Common myeloid progenitor, CD34-positive (primary cell): ENCODE measurements at regions of chr12 and their contacts with region 1.

Region 1: GRCh38 chr12:49644620-49644994 is 21.2 kb downstream of the PRPF40B start:
- DNase-seq: peak; percentile 79 to 91 (median 87)
- H3K4me3 ChIP-seq: peak overlapping the region in 1 of 7 experiments; percentile 19
- H3K27ac ChIP-seq: no peak overlapping the region
- H3K4me1 ChIP-seq: peaks cover 0 to 23% (median 15%) of the 10 kb centered on the region in 4 experiments
- H3K27me3 ChIP-seq: no peaks in the 10 kb centered on the region

Region 2: GRCh38 chr12:49631336-49631907 is 13.2 kb before region 1 on chr12:
- CTCF ChIA-PET with region 1: interaction called, 67 read pairs
- POLR2A ChIA-PET with region 1: interaction called, 3 read pairs
- DNase-seq: no peak
- H3K4me3 ChIP-seq: no peak overlapping the region
- H3K27ac ChIP-seq: no peak overlapping the region
- H3K4me1 ChIP-seq: no peaks in the 10 kb centered on the region
- H3K27me3 ChIP-seq: peaks cover 0 to 2% (median 0%) of the 10 kb centered on the region in 5 experiments

Region 3: DNA sequence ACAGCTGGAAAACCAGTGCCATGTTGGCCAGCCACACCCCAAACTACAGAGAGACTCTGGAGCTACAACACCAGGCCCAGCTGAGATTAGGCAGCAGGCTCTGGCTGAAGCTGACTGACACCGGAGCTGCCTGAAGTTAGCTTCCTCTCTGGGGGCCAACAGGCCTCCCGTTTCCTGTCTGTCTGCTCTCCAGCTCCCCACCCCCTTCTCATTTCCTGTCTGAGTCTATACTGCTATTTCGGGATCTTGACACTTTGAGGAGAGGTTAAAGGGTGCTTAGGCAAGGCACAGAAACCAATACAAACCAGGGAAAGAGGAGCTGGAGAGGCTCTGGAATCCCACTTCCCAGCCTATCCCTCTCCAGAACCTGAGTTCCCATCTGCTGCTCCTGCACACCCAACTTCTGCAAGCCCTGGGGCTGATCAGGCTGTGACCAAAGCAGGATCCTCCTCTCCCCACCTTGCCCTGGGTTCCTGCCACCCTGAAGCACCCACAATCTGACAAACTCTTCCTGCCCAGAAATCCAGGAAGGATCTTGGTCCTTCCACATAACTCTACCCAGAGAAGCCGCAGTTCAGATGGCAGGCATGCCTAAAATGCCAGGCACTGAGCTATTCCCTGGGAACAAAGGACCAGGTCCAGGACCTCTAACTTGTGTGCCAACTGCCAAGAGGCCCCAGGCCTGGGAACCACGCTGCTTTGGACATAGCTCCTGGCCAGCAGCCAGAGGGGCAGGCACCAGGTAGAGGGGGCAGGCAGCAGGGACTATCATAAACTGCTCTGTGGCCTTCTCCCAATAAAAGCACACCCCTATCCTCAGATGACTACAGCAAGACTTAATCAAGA is 18.6 kb after region 1 on chr12:
- CTCF ChIA-PET with region 1: interaction called, 167 read pairs
- POLR2A ChIA-PET with region 1: interaction called, 8 read pairs
- DNase-seq: peak; percentile 68 to 90 (median 86)
- H3K4me3 ChIP-seq: peak overlapping the region in 4 of 7 experiments; percentile 42 to 61 (median 50)
- H3K27ac ChIP-seq: peak overlapping the region; percentile 25 to 75
- H3K4me1 ChIP-seq: peaks cover 23 to 57% (median 51%) of the 10 kb centered on the region in 4 experiments
- H3K27me3 ChIP-seq: no peaks in the 10 kb centered on the region

Region 4: GRCh38 chr12:49687941-49688340 is 43.3 kb after region 1 on chr12:
- CTCF ChIA-PET with region 1: interaction called, 16 read pairs
- POLR2A ChIA-PET with region 1: no interaction called
- DNase-seq: no peak
- H3K4me3 ChIP-seq: no peak overlapping the region
- H3K27ac ChIP-seq: no peak overlapping the region
- H3K4me1 ChIP-seq: peaks cover 0 to 9% (median 4%) of the 10 kb centered on the region in 4 experiments
- H3K27me3 ChIP-seq: peaks cover 0 to 1% (median 0%) of the 10 kb centered on the region in 5 experiments

Region 5: GRCh38 chr12:49698619-49699545 is 54.3 kb after region 1 on chr12:
- CTCF ChIA-PET with region 1: interaction called, 929 read pairs
- POLR2A ChIA-PET with region 1: interaction called, 3 read pairs
- DNase-seq: peak; percentile 64 to 93 (median 89)
- H3K4me3 ChIP-seq: peak overlapping the region in 5 of 7 experiments; percentile 17 to 56 (median 42)
- H3K27ac ChIP-seq: no peak overlapping the region
- H3K4me1 ChIP-seq: peaks cover 26 to 38% (median 29%) of the 10 kb centered on the region in 4 experiments
- H3K27me3 ChIP-seq: peaks cover 0 to 3% (median 0%) of the 10 kb centered on the region in 5 experiments